Common myeloid progenitor, CD34-positive (primary cell): ENCODE measurements at regions of chr1 and their contacts with region 1.

Region 1: DNA sequence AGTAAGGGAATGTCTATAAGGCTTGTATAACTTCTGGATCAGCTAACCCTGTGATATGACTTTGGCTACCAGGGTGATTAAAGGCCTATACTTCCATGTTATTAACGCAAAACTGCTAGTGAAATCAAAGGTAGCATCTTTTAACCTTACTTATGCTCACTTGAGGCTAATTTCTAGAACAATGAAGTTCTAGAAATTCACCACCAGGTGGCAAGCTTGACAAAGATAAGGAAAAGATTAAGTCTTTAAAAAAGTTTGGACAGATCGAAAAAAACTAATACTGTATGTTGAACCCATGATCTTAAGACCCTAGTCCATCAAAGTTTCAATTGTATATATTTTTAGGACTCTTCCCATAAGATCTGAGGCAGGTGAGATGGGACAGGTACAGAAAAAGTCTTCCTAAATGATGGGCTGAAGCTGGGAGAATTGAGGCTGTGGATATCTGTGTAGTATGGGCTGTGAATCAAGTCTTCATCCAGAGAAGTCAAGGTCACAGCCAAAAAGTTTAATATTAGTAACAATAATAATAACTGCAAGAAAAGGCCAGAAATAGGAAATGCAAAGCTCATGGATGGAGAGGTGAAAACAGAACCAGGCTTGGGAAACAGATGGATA is 18.8 kb downstream of the KYAT3 start:
- DNase-seq: peak; percentile 52 to 71 (median 67)
- H3K4me3 ChIP-seq: no peak overlapping the region
- H3K27ac ChIP-seq: no peak overlapping the region
- H3K4me1 ChIP-seq: peaks cover 0 to 6% (median 2%) of the 10 kb centered on the region in 4 experiments
- H3K27me3 ChIP-seq: no peaks in the 10 kb centered on the region

Region 2: DNA sequence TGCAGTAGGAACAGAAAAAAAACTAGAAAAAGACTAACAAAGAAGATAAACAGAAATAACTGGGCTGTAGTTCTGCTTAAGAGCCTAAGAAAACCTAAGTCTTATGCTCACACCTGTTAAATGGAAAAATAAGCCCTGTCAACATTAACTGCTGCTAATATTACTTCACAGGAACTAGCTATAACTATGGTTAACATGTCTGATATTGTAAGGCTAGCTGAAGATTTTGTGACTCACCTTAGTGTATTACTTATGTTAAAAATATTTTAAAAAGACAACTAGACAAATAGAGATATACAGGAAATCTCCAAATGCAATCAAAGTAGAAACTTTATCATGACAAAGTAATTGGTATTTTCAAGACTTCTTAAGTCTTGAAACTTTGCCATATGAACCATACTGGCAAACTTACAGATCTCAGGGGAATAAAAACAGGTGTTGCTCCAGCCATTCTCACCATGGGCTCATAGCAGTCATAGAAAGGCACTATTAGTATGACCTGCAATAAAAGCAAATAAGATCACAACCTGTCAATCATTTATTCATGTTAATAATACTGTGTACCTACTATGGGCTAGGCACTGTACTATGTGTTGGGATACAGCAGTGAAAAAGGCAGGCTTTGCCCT is 11.9 kb before region 1 on chr1:
- CTCF ChIA-PET with region 1: interaction called, 12 read pairs
- POLR2A ChIA-PET with region 1: no interaction called
- DNase-seq: no peak
- H3K4me3 ChIP-seq: no peak overlapping the region
- H3K27ac ChIP-seq: no peak overlapping the region
- H3K4me1 ChIP-seq: no peaks in the 10 kb centered on the region
- H3K27me3 ChIP-seq: no peaks in the 10 kb centered on the region

Region 3: DNA sequence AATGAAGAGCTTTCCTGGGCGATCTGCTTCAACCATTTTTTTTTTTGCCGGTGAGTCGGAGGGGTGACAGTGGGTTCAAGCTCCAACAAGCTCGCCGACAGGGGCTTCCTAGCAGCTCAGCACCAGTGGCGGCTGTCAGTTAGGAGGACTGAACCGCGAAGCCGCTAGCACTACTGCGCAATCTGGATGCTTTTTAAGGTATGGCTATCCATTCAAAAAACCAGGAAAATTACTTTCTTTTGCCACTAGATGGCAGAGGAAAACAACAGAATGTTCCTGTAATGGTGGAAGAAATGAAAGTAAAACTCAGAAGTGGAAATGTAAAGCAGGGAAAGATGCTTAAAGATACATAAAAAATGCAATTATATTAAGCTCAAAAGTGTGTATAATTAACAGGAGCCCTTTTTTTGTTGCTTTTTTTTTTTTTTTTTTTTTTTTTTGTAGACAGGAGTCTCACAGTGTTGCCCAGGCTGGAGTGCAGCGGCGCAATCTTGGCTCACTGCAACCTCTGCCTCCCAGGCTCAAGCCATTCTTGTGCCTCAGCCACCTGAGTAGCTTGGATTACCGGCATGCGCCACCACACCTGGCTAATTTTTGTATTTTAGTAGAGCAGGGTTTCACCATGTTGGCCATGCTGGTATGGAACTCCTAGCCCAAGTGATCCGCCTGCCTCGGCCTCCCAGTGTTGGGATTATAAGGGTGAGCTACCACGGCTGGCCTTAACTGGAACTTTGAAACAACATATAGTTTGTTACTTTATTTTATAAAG is 10.3 kb after region 1 on chr1:
- CTCF ChIA-PET with region 1: interaction called, 37 read pairs
- POLR2A ChIA-PET with region 1: no interaction called
- DNase-seq: peak; percentile 73 to 86 (median 85)
- H3K4me3 ChIP-seq: peak overlapping the region in 2 of 7 experiments; percentile 19 to 29
- H3K27ac ChIP-seq: no peak overlapping the region
- H3K4me1 ChIP-seq: peaks cover 0 to 24% (median 12%) of the 10 kb centered on the region in 4 experiments
- H3K27me3 ChIP-seq: no peaks in the 10 kb centered on the region

Region 4: DNA sequence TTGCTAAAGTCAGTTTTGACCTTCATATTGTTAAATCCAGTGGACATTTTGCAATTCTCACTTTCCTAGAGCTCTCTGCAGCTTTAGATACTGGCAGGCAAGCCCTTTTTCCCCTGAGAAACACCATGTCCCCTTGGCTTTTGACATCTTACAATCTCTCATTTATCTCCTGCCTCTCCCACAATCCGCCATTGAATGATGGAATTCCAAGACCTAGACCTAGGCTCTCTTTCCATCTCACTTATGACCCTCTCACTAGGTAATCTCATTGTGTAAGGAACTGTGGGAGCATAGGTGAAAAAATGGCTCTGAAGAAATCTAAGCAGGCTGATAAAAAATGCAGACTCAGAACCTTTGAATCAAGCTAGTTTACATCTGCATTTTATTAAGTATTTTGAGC is 16.8 kb after region 1 on chr1:
- CTCF ChIA-PET with region 1: interaction called, 37 read pairs
- POLR2A ChIA-PET with region 1: no interaction called
- DNase-seq: no peak
- H3K4me3 ChIP-seq: no peak overlapping the region
- H3K27ac ChIP-seq: no peak overlapping the region
- H3K4me1 ChIP-seq: peaks cover 11 to 27% (median 17%) of the 10 kb centered on the region in 4 experiments
- H3K27me3 ChIP-seq: no peaks in the 10 kb centered on the region

Region 5: GRCh38 chr1:89047734-89048133 is 74.1 kb after region 1 on chr1:
- CTCF ChIA-PET with region 1: no interaction called
- POLR2A ChIA-PET with region 1: no interaction called
- DNase-seq: no peak
- H3K4me3 ChIP-seq: no peak overlapping the region
- H3K27ac ChIP-seq: no peak overlapping the region
- H3K4me1 ChIP-seq: no peaks in the 10 kb centered on the region
- H3K27me3 ChIP-seq: no peaks in the 10 kb centered on the region